Adrenal gland (tissue), 19 donors: ENCODE measurements at regions of chr7 and their contacts with region 1.

Region 1: GRCh38 chr7:39948956-39949928 is 814 bp upstream of the CDK13 start:
- DNase-seq: peak; percentile 97 to 99 (median 99)
- H3K4me3 ChIP-seq: peak overlapping the region in 3 of 4 donors; percentile 85 to 91 (median 90)
- H3K27ac ChIP-seq: peak overlapping the region; percentile 98 to 100 (median 99)
- H3K4me1 ChIP-seq: peaks cover 13 to 27% of the 10 kb centered on the region in 2 donors
- H3K27me3 ChIP-seq: no peaks in the 10 kb centered on the region
- CTCF ChIP-seq: no peak
- POLR2A ChIP-seq: peak; percentile 85 to 96

Region 2: DNA sequence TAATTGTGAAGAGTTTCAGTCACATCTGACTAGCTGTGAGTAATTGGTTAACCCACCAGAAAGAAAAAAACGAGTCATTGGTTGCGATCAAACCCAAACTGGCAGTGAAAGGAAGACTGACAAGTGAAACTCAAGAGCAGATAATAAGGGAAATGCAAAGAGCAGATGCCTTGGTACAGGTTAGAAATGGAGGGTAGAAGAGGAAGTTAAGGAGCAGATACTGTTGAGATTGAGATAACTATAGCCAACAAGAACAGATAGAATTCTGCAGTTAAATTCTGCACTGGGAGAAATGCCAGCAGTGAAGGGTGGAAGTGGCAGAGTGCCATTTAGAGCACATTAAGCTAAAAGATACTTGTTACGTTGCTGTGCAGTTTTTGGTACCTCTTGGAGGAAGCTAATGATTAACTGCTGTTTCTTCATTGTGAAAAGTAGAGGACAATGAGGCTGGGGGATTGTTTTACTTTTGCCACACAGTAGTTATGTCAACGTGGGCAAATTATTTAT is 66.6 kb after region 1 on chr7:
- intact Hi-C with region 1: loop called in 1 of 2 experiments (anchors 10 kb)
- DNase-seq: peak in 6 of 7 donors; percentile 11 to 70 (median 37)
- H3K4me3 ChIP-seq: no peak overlapping the region
- H3K27ac ChIP-seq: no peak overlapping the region
- H3K4me1 ChIP-seq: peaks cover 0 to 8% of the 10 kb centered on the region in 2 donors
- H3K27me3 ChIP-seq: no peaks in the 10 kb centered on the region
- CTCF ChIP-seq: no peak
- POLR2A ChIP-seq: no peak

Region 3: DNA sequence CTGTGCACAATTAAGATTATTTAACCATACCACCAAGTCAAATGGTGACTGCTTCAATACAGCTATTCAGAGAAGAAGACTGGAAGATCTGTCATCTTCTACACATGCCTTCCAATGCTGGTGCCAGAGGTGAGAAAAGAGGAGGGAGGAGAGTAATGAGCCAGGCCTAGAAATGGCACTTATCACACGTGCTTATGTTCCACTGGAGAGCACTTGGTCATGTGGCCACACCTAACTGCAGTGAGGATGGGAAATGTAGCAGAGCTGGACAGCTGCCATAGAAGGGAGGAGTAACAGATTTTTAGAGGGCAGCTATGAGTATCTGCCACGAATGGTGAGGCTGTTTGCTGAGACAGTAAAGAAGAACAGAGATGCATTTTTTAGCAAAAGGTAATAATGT is 108.0 kb after region 1 on chr7:
- intact Hi-C with region 1: loop called in 1 of 2 experiments (anchors 5 kb)
- DNase-seq: peak in 4 of 7 donors; percentile 17 to 46 (median 27)
- H3K4me3 ChIP-seq: no peak overlapping the region
- H3K27ac ChIP-seq: no peak overlapping the region
- H3K4me1 ChIP-seq: peaks cover 0 to 4% of the 10 kb centered on the region in 2 donors
- H3K27me3 ChIP-seq: no peaks in the 10 kb centered on the region
- CTCF ChIP-seq: no peak
- POLR2A ChIP-seq: no peak

Region 4: DNA sequence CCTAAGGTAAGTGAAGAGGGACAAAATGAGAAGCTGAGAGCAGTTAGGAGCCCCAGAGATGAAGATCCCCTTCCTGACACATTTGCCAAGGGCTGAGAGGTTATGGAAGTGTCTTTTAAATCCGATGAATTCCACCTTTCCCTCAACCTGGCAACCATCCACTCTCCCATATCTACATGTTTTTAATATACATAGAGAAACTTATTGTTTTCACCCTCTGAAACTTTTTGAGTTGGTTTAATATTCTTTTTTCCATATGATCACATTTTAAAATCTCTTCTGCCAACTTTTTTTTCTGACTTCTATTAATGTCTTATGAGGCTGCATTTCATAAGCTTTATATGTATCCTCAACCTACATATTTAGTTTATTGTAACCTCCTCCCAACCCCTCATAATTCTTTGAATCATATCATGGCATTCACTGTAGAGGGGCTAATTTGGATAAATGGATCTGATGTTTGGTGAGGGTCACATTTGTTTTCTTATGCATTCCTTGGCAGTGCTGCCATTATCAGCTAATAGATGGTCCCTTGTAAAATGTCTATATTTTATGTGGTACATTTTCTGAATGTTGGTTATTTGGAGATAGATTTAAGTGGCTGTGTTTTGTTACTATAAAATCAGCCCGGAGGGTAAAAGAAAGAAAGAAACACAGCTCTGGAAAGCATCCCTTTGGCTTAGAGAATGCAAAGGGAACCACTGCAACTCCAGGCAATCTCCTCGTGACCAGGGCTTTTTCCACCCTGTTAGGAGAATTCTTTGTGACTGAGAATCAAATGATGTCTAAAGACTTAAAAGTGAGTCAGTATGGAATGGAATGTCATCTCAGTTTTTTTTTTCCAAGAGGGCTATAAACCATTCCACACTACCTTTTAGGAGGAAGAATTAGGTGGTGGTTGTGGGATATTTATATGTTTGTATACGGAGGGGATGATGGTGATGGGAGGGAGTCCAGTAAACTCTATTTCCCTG is 519.9 kb after region 1 on chr7:
- intact Hi-C with region 1: no loop called
- DNase-seq: no peak
- H3K4me3 ChIP-seq: no peak overlapping the region
- H3K27ac ChIP-seq: no peak overlapping the region
- H3K4me1 ChIP-seq: no peaks in the 10 kb centered on the region
- H3K27me3 ChIP-seq: no peaks in the 10 kb centered on the region
- CTCF ChIP-seq: no peak
- POLR2A ChIP-seq: no peak